Activated CD4-positive, alpha-beta memory T cell treated with anti-CD3 and anti-CD28 coated beads, Interleukin-2, amount 10 ng/mL, durations not matched to agents 7 days and 5 days (primary cell): ENCODE measurements at regions of chr11 and their contacts with region 1.

Region 1: DNA sequence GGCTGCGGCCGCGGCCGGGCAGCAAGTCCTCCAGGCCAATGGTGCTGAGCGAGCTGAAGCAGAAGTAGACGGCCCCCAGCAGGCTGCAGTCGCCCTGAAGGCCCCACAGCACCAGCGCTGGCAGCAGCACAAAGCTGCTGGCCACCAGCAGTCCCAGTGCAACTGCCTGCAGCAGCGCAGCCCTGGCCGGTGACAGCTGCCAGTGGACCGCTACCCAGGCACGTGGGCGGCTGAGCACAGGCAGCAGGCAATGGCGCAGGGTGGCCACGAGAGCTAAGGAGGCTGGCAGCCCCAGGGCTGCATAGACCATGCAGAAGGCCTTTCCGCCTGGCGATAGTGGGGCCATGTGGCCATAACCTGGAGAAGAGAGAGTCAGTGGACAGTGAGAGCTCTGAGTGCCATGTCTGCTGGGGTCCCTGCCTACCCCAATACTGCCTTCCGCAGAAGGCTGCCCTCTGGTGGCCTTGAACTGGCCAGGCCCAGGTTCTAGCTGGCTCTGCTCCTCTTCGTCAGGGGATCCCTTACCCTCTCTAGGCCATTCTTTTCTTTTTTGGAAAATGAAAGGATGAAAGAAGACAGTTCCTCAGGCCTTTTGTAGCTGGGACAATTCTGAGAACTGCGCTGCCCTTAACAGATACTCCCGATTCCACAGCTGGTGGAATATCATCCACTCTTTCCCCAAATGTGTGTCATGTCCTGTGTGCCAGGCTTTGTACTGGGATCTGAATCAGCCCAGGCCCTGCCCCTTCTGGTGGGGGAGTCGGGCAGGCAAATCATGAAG is 1.9 kb downstream of the KCNK7 start:
- DNase-seq: no peak
- H3K4me3 Mint-ChIP-seq: no peak overlapping the region
- H3K27ac Mint-ChIP-seq: peak overlapping the region; percentile 29
- H3K4me1 Mint-ChIP-seq: peaks cover 34% of the 10 kb centered on the region
- H3K27me3 Mint-ChIP-seq: no peaks in the 10 kb centered on the region

Region 2: DNA sequence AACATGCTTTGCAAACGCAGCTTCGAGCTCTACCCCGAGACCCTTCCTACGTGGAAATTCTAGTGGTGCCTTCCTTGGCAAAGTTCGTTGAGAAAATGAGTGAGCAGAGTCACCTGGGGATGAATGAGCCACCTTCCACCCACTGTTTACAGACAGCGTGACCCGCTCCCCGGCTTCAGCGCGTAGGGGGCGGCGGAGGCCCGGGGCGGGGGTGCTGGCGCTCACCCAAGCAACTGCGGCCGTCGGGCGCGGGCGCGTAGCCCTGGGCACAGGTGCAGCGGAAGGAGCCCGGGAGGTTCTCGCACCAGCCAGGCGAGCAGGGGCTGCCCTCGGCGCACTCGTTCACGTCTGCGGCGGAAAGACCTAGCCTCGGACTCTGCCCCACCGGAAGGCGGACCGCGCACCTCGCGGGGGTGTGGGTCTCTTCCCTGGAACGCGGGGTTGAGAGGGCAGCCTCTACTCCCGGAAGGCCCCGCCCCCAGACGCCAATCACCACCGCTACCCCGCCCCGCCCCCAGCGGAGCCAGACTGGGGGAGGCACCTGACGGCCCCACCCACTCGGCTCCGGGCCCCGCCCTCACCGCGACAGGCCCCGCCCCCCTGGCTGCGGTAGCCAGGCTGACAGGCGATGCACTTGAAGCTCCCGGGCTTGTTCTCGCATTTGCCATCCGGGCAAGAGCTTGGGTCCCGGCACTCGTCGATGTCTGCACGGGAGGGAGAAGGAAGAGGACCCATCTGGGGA is 47.3 kb before region 1 on chr11:
- CTCF ChIA-PET with region 1: interaction called, 44 read pairs
- POLR2A ChIA-PET with region 1: interaction called, 17 read pairs
- DNase-seq: peak; percentile 98
- H3K4me3 Mint-ChIP-seq: peak overlapping the region; percentile 73
- H3K27ac Mint-ChIP-seq: peak overlapping the region; percentile 82
- H3K4me1 Mint-ChIP-seq: peaks cover 51% of the 10 kb centered on the region
- H3K27me3 Mint-ChIP-seq: no peaks in the 10 kb centered on the region

Region 3: DNA sequence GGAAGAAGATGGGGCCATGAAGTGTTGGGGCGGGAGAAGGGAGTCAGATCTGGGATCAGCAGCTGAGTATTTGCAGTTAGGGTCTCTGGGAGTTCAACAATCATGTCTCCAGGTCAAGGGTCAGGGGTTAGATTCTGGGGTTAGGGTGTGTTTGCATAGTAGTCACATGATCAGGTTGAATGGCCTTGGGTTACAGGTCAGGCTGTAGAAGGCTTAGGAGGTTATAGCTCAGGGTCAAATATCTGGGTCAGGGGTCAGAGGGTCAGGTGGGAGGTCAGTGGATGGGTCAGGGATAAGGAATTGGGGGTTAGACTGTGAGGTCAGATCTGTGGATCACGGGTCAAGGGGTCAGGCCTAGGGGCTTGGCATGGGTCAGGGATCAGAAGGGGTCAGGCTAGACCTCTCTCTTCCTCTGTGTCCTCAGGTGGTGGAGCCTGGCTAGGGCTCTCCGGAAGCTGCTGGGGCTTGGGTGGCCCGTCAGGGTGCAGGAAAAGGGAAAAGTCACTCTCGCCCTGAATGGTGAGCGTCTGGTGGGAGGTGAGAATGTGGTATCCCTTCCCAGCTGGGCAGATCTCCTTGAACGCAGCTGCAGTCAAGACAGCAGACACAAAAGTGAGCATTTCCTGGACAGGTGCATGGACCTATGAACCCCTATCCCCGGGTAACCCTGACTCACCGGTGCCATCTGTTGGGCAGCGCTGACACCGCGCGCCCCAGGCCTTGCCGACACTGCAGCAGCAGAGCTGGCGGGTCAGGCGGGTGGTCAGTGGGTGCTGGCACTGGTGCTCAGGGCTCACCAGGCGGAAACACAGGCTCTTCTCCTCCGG is 41.9 kb before region 1 on chr11:
- CTCF ChIA-PET with region 1: interaction called, 13 read pairs
- POLR2A ChIA-PET with region 1: interaction called, 9 read pairs
- DNase-seq: peak; percentile 73
- H3K4me3 Mint-ChIP-seq: no peak overlapping the region
- H3K27ac Mint-ChIP-seq: peak overlapping the region; percentile 31
- H3K4me1 Mint-ChIP-seq: peaks cover 70% of the 10 kb centered on the region
- H3K27me3 Mint-ChIP-seq: no peaks in the 10 kb centered on the region

Region 4: DNA sequence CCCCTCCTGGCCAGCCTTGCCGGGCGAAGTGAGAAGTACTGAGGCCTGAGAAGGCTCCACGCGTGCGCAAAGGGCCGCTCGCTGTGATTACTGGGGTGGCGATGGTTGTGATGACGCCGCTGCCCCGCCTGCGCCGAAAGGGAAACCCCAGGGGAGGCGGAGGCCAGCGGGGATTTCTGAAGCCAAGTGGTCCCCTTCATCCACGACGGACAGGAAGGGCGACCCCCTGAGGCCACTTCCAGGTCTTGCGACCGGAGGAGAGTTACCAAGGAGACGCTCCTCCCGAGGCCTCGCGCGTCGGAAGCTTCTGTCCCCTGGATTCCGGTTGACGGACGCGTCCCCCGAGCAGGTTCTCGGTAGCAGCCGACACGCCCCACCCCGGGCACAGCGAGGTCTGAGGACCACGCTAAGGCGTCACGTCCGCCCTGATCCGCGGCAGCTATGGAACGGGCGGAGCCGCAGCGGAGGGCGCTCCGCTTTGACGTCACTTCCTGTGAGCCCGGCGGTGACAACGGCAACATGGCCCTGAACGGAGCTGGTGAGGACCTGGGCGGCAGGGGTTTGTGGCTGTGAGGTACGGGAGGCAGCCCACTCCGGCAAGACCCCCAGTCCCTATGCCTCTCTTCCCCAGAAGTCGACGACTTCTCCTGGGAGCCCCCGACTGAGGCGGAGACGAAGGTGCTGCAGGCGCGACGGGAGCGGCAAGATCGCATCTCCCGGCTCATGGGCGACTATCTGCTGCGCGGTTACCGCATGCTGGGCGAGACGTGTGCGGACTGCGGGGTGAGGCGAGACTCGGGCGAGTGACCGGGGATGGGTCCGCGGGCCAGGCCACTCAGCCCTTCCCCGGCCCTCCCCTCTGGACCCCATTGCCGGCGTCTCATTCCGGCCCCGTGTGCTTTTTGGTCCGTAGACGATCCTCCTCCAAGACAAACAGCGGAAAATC is 23.5 kb before region 1 on chr11 and contains the start of gene ZNRD2:
- CTCF ChIA-PET with region 1: interaction called, 60 read pairs
- POLR2A ChIA-PET with region 1: interaction called, 96 read pairs
- DNase-seq: peak; percentile 99
- H3K4me3 Mint-ChIP-seq: peak within 1 kb of the TSS; percentile 100
- H3K27ac Mint-ChIP-seq: peak within 1 kb of the TSS; percentile 99
- H3K4me1 Mint-ChIP-seq: peaks cover 71% of the 10 kb centered on the region
- H3K27me3 Mint-ChIP-seq: no peaks in the 10 kb centered on the region
- total RNA-seq, gene ZNRD2: 25.3 to 27.8 TPM

Region 5: GRCh38 chr11:65575568-65576231 is 18.0 kb before region 1 on chr11 and contains the start of gene EHBP1L1:
- CTCF ChIA-PET with region 1: interaction called, 60 read pairs
- POLR2A ChIA-PET with region 1: interaction called, 96 read pairs
- DNase-seq: peak; percentile 87
- H3K4me3 Mint-ChIP-seq: peak within 1 kb of the TSS; percentile 88
- H3K27ac Mint-ChIP-seq: peak within 1 kb of the TSS; percentile 97
- H3K4me1 Mint-ChIP-seq: peaks cover 57% of the 10 kb centered on the region
- H3K27me3 Mint-ChIP-seq: no peaks in the 10 kb centered on the region
- total RNA-seq, gene EHBP1L1: 118 to 119 TPM

Region 6: GRCh38 chr11:65604258-65604657 is 10.6 kb after region 1 on chr11:
- CTCF ChIA-PET with region 1: interaction called, 10 read pairs
- POLR2A ChIA-PET with region 1: interaction called, 10 read pairs
- DNase-seq: no peak
- H3K4me3 Mint-ChIP-seq: no peak overlapping the region
- H3K27ac Mint-ChIP-seq: no peak overlapping the region
- H3K4me1 Mint-ChIP-seq: peaks cover 11% of the 10 kb centered on the region
- H3K27me3 Mint-ChIP-seq: no peaks in the 10 kb centered on the region

Region 7: GRCh38 chr11:65637794-65638317 is 44.1 kb after region 1 on chr11 and contains the start of gene SIPA1:
- CTCF ChIA-PET with region 1: interaction called, 6 read pairs
- POLR2A ChIA-PET with region 1: interaction called, 10 read pairs
- DNase-seq: peak; percentile 69
- H3K4me3 Mint-ChIP-seq: peak within 1 kb of the TSS; percentile 95
- H3K27ac Mint-ChIP-seq: peak within 1 kb of the TSS; percentile 97
- H3K4me1 Mint-ChIP-seq: peaks cover 64% of the 10 kb centered on the region
- H3K27me3 Mint-ChIP-seq: no peaks in the 10 kb centered on the region
- total RNA-seq, gene SIPA1: 201 to 205 TPM